ENCODE measurements at regions of chr17 and their contacts with region 1.

Region 1: DNA sequence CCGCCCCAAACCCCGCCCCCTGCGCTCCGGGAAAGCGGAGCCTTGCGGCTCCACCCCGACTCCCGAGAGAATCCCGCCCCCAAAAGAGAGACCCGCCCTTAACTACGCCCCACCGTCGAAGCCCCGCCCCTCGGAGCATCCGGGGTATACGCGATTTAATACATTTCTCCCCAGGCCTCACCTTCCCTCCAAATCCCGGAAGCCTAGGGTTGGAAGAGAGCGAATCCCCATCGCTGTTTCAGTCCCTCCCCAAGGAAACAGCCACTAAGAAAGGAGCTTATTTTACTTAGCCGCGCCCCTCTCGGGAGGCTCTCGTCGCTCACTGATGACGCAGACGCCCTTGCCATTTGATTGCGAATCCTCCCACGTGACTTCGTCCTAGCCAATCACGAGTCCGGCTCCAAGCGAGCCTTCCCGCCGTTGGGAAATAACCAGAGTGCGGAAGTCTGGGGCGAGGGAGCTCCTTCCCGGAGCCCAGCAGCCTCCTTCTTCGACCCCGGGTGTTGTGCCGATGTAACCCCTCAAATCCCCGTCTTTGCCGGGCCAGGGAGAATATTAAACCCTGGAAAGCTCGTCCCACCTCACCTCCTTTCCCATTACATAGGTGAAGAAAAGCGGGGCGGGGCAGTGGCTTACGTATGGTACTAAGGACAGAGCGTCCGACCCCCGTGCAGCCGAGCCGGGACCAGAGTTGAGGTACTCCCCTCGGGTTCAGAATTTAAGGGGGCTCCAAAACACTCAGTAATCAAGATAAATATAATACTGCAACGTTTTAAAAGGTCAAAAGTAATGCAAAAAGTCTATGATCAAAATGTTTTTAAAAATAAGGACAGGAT is 462 bp upstream of the FDXR start:
- DNase-seq: peak; percentile 97 to 99
- H3K4me3 ChIP-seq: peak overlapping the region; percentile 85
- H3K27ac ChIP-seq: peak overlapping the region; percentile 64
- H3K4me1 ChIP-seq: peaks cover 23% of the 10 kb centered on the region
- H3K27me3 ChIP-seq: no peaks in the 10 kb centered on the region
- CTCF ChIP-seq: no peak

Region 2: GRCh38 chr17:74892974-74893911 is 20.0 kb after region 1 on chr17 and contains the start of gene FADS6:
- CTCF ChIA-PET with region 1: no interaction called
- POLR2A ChIA-PET with region 1: no interaction called
- intact Hi-C with region 1: no loop called
- DNase-seq: no peak
- H3K4me3 ChIP-seq: no peak within 1 kb of the TSS
- H3K27ac ChIP-seq: no peak within 1 kb of the TSS
- H3K4me1 ChIP-seq: no peaks in the 10 kb centered on the region
- H3K27me3 ChIP-seq: peaks cover 45% of the 10 kb centered on the region
- CTCF ChIP-seq: no peak
- total RNA-seq, gene FADS6: not detected in 2 replicates

Region 3: GRCh38 chr17:74917430-74917829 is 44.2 kb after region 1 on chr17:
- CTCF ChIA-PET with region 1: interaction called, 3 read pairs
- POLR2A ChIA-PET with region 1: interaction called, 4 read pairs
- intact Hi-C with region 1: loop called (anchors 1 kb)
- DNase-seq: no peak
- H3K4me3 ChIP-seq: no peak overlapping the region
- H3K27ac ChIP-seq: no peak overlapping the region
- H3K4me1 ChIP-seq: no peaks in the 10 kb centered on the region
- H3K27me3 ChIP-seq: peaks cover 2% of the 10 kb centered on the region
- CTCF ChIP-seq: no peak

Region 4: DNA sequence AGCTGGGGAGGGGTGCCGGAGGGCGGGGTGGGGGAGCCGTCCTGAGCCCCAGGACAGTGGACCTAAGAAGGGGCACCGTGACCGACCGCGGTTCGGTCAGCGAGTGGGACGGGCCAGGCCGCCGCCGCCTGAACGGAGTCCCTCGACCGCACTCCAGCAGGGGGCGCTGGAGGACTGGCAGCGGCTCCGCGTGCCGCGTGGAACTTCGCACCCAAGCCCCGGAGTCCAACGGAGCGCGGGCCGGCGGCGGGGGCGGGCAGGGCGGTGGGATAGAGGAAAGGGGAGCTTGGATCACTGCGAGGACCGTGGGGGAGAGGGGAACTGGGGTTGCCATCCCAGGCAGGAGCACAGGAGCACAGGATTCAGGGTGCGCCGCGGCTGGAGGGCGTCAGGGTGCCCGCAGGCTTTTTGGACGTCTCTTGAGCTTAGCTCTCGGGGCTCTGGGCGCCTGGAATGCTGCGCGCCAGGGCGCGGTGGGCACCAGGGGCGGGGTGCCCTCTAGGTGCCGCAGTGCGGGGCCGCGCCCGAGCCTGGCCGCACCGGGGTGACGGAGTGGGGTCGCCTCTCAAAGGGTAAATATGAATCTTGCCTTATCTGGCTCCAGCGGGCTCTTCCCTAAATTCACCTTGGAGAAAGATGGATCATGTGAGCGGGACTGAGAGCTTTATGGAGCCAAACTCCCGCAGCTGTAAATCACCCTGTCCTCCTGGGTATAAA is 50.4 kb after region 1 on chr17:
- CTCF ChIA-PET with region 1: interaction called, 10 read pairs
- POLR2A ChIA-PET with region 1: interaction called, 4 read pairs
- intact Hi-C with region 1: no loop called
- DNase-seq: peak in 1 of 2 experiments; percentile 56
- H3K4me3 ChIP-seq: peak overlapping the region; percentile 55; the same call in 1 of the 2 replicates
- H3K27ac ChIP-seq: no peak overlapping the region
- H3K4me1 ChIP-seq: no peaks in the 10 kb centered on the region
- H3K27me3 ChIP-seq: peaks cover 34% of the 10 kb centered on the region
- CTCF ChIP-seq: peak; percentile 92